CD4-positive, alpha-beta T cell (primary cell): ENCODE measurements at regions of chr1 and their contacts with region 1.

Region 1: GRCh38 chr1:150765296-150765976 is at the start of gene CTSS:
- DNase-seq: peak in 3 of 14 experiments; percentile 64 to 68 (median 66)
- ATAC-seq: peak; percentile 64
- H3K4me3 ChIP-seq: peak within 1 kb of the TSS; percentile 56
- H3K4me3 Mint-ChIP-seq: peak within 1 kb of the TSS; percentile 98
- H3K27ac ChIP-seq: peak within 1 kb of the TSS in 1 of 2 donors; percentile 62
- H3K27ac Mint-ChIP-seq: peak within 1 kb of the TSS; percentile 97
- H3K4me1 ChIP-seq: peaks cover 24% of the 10 kb centered on the region
- H3K4me1 Mint-ChIP-seq: peaks cover 59% of the 10 kb centered on the region
- H3K27me3 ChIP-seq: no peaks in the 10 kb centered on the region
- H3K27me3 Mint-ChIP-seq: no peaks in the 10 kb centered on the region
- CTCF ChIP-seq: no peak
- total RNA-seq, gene CTSS: 83.1 to 83.5 TPM

Region 2: GRCh38 chr1:150696590-150697524 is 68.6 kb before region 1 on chr1 and contains the start of gene GOLPH3L:
- CTCF ChIA-PET with region 1: no interaction called
- POLR2A ChIA-PET with region 1: interaction called, 8 read pairs
- intact Hi-C with region 1: loop called in 1 of 2 experiments (anchors 1 kb)
- DNase-seq: peak; percentile 73 to 98 (median 83)
- ATAC-seq: peak; percentile 99
- H3K4me3 ChIP-seq: peak within 1 kb of the TSS; percentile 69
- H3K4me3 Mint-ChIP-seq: peak within 1 kb of the TSS; percentile 94
- H3K27ac ChIP-seq: peak within 1 kb of the TSS; percentile 39 to 62
- H3K27ac Mint-ChIP-seq: peak within 1 kb of the TSS; percentile 88
- H3K4me1 ChIP-seq: no peaks in the 10 kb centered on the region
- H3K4me1 Mint-ChIP-seq: peaks cover 40% of the 10 kb centered on the region
- H3K27me3 ChIP-seq: no peaks in the 10 kb centered on the region
- H3K27me3 Mint-ChIP-seq: peaks cover 4% of the 10 kb centered on the region
- CTCF ChIP-seq: no peak
- total RNA-seq, gene GOLPH3L: 2.4 to 2.6 TPM

Region 3: DNA sequence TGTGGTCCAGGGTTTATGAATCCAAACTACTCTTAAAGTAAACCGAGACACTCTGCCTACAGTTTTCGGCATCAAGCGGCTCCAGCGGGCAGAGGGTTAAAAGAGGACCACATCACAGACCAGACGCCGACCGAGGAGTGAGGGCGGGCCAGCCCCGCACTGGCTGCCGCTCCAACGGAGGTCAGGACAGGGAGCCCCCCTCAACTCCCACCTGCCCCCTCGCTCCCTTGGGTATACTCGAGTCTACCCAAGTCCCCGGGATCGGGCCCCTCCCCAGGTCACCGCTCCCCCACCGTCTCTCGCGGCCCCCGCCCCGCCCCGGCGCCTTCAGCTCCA is 110.7 kb after region 1 on chr1:
- CTCF ChIA-PET with region 1: no interaction called
- POLR2A ChIA-PET with region 1: no interaction called
- intact Hi-C with region 1: loop called in 1 of 2 experiments (anchors 5 kb)
- DNase-seq: no peak
- ATAC-seq: no peak
- H3K4me3 ChIP-seq: peak overlapping the region; percentile 79
- H3K4me3 Mint-ChIP-seq: peak overlapping the region; percentile 98
- H3K27ac ChIP-seq: peak overlapping the region; percentile 68 to 86
- H3K27ac Mint-ChIP-seq: peak overlapping the region; percentile 92
- H3K4me1 ChIP-seq: peaks cover 15% of the 10 kb centered on the region
- H3K4me1 Mint-ChIP-seq: peaks cover 43% of the 10 kb centered on the region
- H3K27me3 ChIP-seq: no peaks in the 10 kb centered on the region
- H3K27me3 Mint-ChIP-seq: no peaks in the 10 kb centered on the region
- CTCF ChIP-seq: no peak